Naive thymus-derived CD4-positive, alpha-beta T cell (primary cell): ENCODE measurements at regions of chr14 and their contacts with region 1.

Region 1: DNA sequence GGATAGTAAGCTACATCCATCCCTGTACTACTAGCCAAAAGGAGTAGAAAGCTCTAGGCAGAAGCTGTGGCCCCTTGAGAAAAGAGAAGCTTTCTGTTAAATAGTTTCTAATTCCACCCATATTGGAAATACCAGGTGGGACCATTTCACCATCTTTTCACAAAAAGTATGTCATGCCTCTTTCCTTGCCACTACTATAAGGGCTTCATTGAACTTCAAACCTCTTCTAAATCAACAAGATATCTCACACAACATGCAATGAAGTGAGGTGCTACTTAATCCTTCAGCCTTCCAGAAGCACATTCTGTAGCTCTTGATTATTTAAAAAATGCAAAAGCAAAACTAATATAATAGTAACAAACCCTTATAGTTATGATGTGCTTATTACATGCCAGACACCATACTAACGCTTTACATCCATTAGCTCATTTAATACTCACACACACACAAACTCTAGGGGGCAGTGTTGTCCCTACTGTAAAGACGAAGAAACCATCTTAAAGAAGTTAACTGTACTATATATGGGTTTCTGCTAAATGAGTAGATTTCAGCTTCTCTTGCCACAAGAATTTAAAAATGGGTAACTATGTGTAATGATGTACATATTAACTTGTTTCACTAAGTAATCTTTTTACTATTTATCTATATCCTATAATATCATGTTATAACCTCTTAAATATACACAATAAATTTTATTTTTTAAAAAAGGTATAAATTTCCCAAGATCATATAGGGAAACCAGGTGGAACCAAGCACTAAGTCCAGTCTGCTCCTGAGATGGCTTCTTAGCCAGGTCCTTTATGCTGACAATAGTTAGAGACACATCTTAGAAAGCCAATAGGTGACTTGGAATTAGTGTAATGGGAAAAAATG is 124.4 kb downstream of the RPS29 start:
- DNase-seq: peak in 7 of 9 donors; percentile 43 to 74 (median 67)
- ATAC-seq: peak; percentile 95
- H3K4me3 ChIP-seq: no peak overlapping the region
- H3K4me3 Mint-ChIP-seq: no peak overlapping the region
- H3K27ac ChIP-seq: no peak overlapping the region
- H3K27ac Mint-ChIP-seq: no peak overlapping the region
- H3K4me1 ChIP-seq: no peaks in the 10 kb centered on the region
- H3K4me1 Mint-ChIP-seq: no peaks in the 10 kb centered on the region
- H3K27me3 ChIP-seq: no peaks in the 10 kb centered on the region
- H3K27me3 Mint-ChIP-seq: peaks cover 0 to 31% (median 6%) of the 10 kb centered on the region in 5 donors

Region 2: GRCh38 chr14:49363821-49364751 is 97.7 kb before region 1 on chr14:
- CTCF ChIA-PET with region 1: no interaction called
- POLR2A ChIA-PET with region 1: no interaction called
- intact Hi-C with region 1: no loop called
- DNase-seq: no peak
- ATAC-seq: no peak
- H3K4me3 ChIP-seq: no peak overlapping the region
- H3K4me3 Mint-ChIP-seq: no peak overlapping the region
- H3K27ac ChIP-seq: no peak overlapping the region
- H3K27ac Mint-ChIP-seq: no peak overlapping the region
- H3K4me1 ChIP-seq: no peaks in the 10 kb centered on the region
- H3K4me1 Mint-ChIP-seq: no peaks in the 10 kb centered on the region
- H3K27me3 ChIP-seq: no peaks in the 10 kb centered on the region
- H3K27me3 Mint-ChIP-seq: peaks cover 0 to 24% (median 7%) of the 10 kb centered on the region in 5 donors

Region 3: GRCh38 chr14:49497725-49498348 is 36.1 kb after region 1 on chr14:
- CTCF ChIA-PET with region 1: interaction called, 14 read pairs
- POLR2A ChIA-PET with region 1: no interaction called
- intact Hi-C with region 1: loop called (anchors 1 kb)
- DNase-seq: peak in 7 of 9 donors; percentile 11 to 59 (median 40)
- ATAC-seq: peak; percentile 85
- H3K4me3 ChIP-seq: no peak overlapping the region
- H3K4me3 Mint-ChIP-seq: no peak overlapping the region
- H3K27ac ChIP-seq: no peak overlapping the region
- H3K27ac Mint-ChIP-seq: no peak overlapping the region
- H3K4me1 ChIP-seq: no peaks in the 10 kb centered on the region
- H3K4me1 Mint-ChIP-seq: peaks cover 0 to 5% (median 0%) of the 10 kb centered on the region in 7 donors
- H3K27me3 ChIP-seq: no peaks in the 10 kb centered on the region
- H3K27me3 Mint-ChIP-seq: peaks cover 5 to 32% (median 20%) of the 10 kb centered on the region in 5 donors

Region 4: DNA sequence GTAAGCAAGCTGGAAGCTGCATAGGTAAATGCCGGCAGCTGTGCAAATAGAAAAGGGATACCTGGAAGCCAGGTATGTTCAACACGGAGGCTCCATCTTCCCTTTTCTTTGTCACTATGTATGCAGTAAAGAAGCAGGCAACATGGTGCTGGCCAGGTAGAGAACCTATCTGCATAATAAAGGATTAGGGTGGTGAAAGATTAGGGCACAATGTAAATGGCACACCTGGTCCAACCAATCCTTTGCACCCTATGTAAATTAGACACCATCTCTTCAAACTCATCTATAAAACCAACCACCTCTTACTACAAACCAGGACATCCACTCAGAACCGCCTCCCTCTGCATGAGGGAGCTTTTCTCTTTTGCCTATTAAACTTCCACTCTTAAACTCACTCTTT is 92.1 kb after region 1 on chr14:
- CTCF ChIA-PET with region 1: no interaction called
- POLR2A ChIA-PET with region 1: no interaction called
- intact Hi-C with region 1: no loop called
- DNase-seq: no peak
- ATAC-seq: no peak
- H3K4me3 ChIP-seq: no peak overlapping the region
- H3K4me3 Mint-ChIP-seq: no peak overlapping the region
- H3K27ac ChIP-seq: no peak overlapping the region
- H3K27ac Mint-ChIP-seq: no peak overlapping the region
- H3K4me1 ChIP-seq: no peaks in the 10 kb centered on the region
- H3K4me1 Mint-ChIP-seq: no peaks in the 10 kb centered on the region
- H3K27me3 ChIP-seq: no peaks in the 10 kb centered on the region
- H3K27me3 Mint-ChIP-seq: peaks cover 0 to 8% (median 0%) of the 10 kb centered on the region in 5 donors

Region 5: DNA sequence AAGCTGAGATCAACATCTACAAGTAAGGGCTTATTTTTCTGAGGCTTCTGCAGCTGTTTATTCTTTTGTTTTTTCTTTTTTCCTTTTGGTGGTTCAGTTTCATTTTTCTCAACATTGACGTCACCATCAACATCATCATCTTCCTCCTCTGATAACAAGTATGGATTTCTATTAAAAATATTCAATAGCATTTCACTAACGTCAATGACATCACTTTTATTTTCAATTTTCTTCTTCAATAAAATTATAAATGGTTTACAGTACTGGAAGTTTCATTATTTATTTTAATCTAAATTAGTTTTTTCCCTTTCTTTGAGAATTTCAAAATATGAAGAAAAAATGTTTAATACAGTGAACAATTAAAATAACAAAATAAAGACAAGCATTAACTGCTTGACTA is 366.9 kb after region 1 on chr14:
- CTCF ChIA-PET with region 1: interaction called, 6 read pairs
- POLR2A ChIA-PET with region 1: no interaction called
- intact Hi-C with region 1: loop called in 1 of 2 experiments (anchors 5 kb)
- DNase-seq: no peak
- ATAC-seq: no peak
- H3K4me3 ChIP-seq: no peak overlapping the region
- H3K4me3 Mint-ChIP-seq: no peak overlapping the region
- H3K27ac ChIP-seq: no peak overlapping the region
- H3K27ac Mint-ChIP-seq: peak overlapping the region in 1 of 9 donors; percentile 65
- H3K4me1 ChIP-seq: no peaks in the 10 kb centered on the region
- H3K4me1 Mint-ChIP-seq: peaks cover 0 to 24% (median 10%) of the 10 kb centered on the region in 7 donors
- H3K27me3 ChIP-seq: no peaks in the 10 kb centered on the region
- H3K27me3 Mint-ChIP-seq: no peaks in the 10 kb centered on the region

Region 6: GRCh38 chr14:50260511-50260910 is 798.7 kb after region 1 on chr14:
- CTCF ChIA-PET with region 1: no interaction called
- POLR2A ChIA-PET with region 1: no interaction called
- intact Hi-C with region 1: loop called in 1 of 2 experiments (anchors 5 kb)
- DNase-seq: peak in 7 of 9 donors; percentile 10 to 46 (median 26)
- ATAC-seq: peak; percentile 67
- H3K4me3 ChIP-seq: no peak overlapping the region
- H3K4me3 Mint-ChIP-seq: no peak overlapping the region
- H3K27ac ChIP-seq: no peak overlapping the region
- H3K27ac Mint-ChIP-seq: peak overlapping the region in 3 of 9 donors; percentile 4 to 16 (median 8)
- H3K4me1 ChIP-seq: no peaks in the 10 kb centered on the region
- H3K4me1 Mint-ChIP-seq: peaks cover 0 to 8% (median 0%) of the 10 kb centered on the region in 7 donors
- H3K27me3 ChIP-seq: no peaks in the 10 kb centered on the region
- H3K27me3 Mint-ChIP-seq: no peaks in the 10 kb centered on the region